GM10248 (cell line): ENCODE measurements at regions of chr16 and their contacts with region 1.

Region 1: GRCh38 chr16:46709469-46710005 is 20.1 kb downstream of the ORC6 start:
- DNase-seq: no peak
- CTCF ChIP-seq: no peak

Region 2: DNA sequence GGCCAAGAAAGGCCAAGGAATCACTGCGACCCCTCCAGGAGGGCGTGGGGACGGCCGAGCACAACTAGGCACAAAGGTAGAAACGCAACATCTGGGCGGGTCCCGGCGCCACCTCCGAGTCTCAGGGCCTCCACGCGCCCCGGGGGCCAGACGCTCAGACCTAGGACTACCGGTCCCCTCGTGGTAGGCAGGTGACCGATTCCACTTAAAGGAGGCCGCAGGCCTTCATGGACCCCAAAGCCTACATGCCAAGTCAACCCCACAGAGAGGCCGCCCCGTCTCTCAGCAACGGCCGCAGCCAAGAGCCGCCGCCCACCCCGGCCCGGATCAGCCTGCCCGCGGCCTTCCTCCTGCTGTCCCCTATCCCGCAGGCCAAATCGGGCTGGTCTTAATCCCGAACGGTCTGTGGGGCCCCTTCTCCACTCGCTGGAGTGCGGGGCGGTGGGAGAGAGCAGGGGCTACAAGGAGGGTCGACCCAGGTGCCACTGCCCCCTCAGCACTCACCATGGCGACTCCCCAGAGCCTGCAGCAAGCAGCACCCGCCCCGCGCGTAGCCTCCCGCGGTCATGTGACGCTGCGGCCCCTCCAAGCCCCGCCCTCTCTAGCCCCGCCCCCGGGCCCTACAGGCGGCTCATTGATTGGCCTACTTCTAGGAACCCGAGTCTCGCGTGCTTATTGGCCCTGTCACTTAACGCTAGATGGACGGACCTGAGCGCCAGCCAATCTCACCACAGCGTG is 20.7 kb before region 1 on chr16 and contains the start of gene VPS35:
- CTCF ChIA-PET with region 1: interaction called, 15 read pairs
- POLR2A ChIA-PET with region 1: no interaction called
- DNase-seq: peak; percentile 96
- CTCF ChIP-seq: peak; percentile 15